Lower leg skin (tissue), 4 donors: ENCODE measurements at regions of chr1 and their contacts with region 1.

Region 1: DNA sequence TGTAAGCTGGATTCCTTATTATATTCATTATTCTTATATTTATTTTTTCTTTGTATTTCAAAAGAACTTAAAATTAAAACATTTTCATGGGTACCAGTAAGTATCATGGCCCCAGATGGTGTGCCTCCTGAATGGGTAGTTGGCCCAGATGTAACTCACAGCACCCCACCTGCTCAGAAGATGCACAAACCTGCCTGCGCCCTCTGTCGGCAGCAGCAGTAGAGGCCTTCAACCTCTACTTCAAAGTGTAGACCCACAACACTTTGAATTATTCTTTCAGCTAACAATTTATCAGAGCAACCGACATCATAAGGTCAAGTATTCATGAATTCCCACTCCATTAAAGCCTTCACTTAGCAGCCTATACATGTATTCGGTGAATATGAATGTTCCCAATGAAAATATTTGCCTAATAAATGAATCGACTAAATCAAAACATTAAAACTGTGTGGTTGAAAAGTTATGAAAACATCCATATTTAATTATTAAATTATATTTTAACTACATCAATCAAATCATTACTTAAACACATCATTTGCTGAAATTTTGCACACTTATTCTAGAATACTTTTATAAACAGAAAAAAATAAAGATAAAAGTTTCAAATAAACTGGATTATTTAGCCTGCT is 25.4 kb downstream of the PIGM start:
- DNase-seq: peak in 1 of 2 donors; percentile 37
- H3K4me3 ChIP-seq: no peak overlapping the region
- CTCF ChIP-seq: peak in 1 of 3 donors; percentile 44
- POLR2A ChIP-seq: no peak

Region 2: GRCh38 chr1:159798893-159799292 is 207.5 kb before region 1 on chr1:
- intact Hi-C with region 1: loop called (anchors 10 kb)
- DNase-seq: peak in 1 of 2 donors; percentile 60
- H3K4me3 ChIP-seq: no peak overlapping the region
- CTCF ChIP-seq: no peak
- POLR2A ChIP-seq: no peak

Region 3: DNA sequence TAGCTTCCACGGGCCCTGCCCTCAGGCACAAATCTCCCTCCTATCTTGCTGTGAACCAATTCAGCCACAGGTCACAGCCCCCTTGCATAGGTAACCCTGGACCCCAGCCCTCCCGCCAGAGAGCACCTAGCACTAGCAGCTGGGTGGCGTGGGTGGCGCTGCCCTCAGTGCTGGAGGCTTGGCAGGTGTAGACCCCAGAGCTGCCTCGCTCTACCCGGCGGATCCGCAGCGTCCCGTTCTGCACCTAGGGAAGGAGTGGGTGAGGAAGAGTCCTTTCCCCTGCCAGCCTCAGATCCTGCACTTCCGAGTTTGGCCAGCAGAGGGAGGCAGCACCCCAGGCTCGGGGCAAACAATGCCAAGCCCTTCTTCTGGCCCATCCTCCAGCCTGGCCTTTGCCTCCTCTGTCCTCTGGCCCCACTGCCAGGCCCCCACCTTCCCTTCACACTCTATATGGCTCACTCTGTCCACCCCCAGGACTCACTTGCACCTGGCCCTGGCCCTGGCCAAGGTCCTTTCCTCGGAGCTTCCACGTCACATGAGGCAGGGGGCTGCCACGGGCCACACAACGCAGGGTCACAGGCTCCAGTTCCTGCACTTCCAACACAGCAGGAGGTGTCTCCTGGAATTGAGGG is 70.0 kb before region 1 on chr1:
- intact Hi-C with region 1: loop called (anchors 5 kb)
- DNase-seq: peak; percentile 68 to 96
- H3K4me3 ChIP-seq: no peak overlapping the region
- CTCF ChIP-seq: peak in 2 of 3 donors; percentile 82 to 93
- POLR2A ChIP-seq: no peak